T-cell (primary cell): ENCODE measurements at regions of chr1 and their contacts with region 1.

Region 1: GRCh38 chr1:214261206-214262123 is 19.5 kb upstream of the SMYD2 start:
- DNase-seq: peak; percentile 28 to 85 (median 73)
- ATAC-seq: peak; percentile 92 to 94 (median 92)
- H3K4me3 ChIP-seq: no peak overlapping the region
- H3K4me3 Mint-ChIP-seq: no peak overlapping the region
- H3K27ac ChIP-seq: no peak overlapping the region
- H3K27ac Mint-ChIP-seq: no peak overlapping the region
- H3K4me1 ChIP-seq: no peaks in the 10 kb centered on the region
- H3K4me1 Mint-ChIP-seq: peaks cover 0 to 3% (median 3%) of the 10 kb centered on the region in 3 donors
- H3K27me3 ChIP-seq: peaks cover 0 to 19% of the 10 kb centered on the region in 2 experiments
- H3K27me3 Mint-ChIP-seq: peaks cover 41 to 67% of the 10 kb centered on the region in 2 donors

Region 2: GRCh38 chr1:214277704-214278635 is 16.5 kb after region 1 on chr1:
- CTCF ChIA-PET with region 1: interaction called, 13 to 20 read pairs
- POLR2A ChIA-PET with region 1: no interaction called
- DNase-seq: no peak
- ATAC-seq: no peak
- H3K4me3 ChIP-seq: no peak overlapping the region
- H3K4me3 Mint-ChIP-seq: no peak overlapping the region
- H3K27ac ChIP-seq: no peak overlapping the region
- H3K27ac Mint-ChIP-seq: peak overlapping the region; percentile 71 to 80
- H3K4me1 ChIP-seq: peaks cover 9 to 25% of the 10 kb centered on the region in 2 experiments
- H3K4me1 Mint-ChIP-seq: peaks cover 26 to 40% (median 33%) of the 10 kb centered on the region in 3 donors
- H3K27me3 ChIP-seq: no peaks in the 10 kb centered on the region
- H3K27me3 Mint-ChIP-seq: no peaks in the 10 kb centered on the region

Region 3: DNA sequence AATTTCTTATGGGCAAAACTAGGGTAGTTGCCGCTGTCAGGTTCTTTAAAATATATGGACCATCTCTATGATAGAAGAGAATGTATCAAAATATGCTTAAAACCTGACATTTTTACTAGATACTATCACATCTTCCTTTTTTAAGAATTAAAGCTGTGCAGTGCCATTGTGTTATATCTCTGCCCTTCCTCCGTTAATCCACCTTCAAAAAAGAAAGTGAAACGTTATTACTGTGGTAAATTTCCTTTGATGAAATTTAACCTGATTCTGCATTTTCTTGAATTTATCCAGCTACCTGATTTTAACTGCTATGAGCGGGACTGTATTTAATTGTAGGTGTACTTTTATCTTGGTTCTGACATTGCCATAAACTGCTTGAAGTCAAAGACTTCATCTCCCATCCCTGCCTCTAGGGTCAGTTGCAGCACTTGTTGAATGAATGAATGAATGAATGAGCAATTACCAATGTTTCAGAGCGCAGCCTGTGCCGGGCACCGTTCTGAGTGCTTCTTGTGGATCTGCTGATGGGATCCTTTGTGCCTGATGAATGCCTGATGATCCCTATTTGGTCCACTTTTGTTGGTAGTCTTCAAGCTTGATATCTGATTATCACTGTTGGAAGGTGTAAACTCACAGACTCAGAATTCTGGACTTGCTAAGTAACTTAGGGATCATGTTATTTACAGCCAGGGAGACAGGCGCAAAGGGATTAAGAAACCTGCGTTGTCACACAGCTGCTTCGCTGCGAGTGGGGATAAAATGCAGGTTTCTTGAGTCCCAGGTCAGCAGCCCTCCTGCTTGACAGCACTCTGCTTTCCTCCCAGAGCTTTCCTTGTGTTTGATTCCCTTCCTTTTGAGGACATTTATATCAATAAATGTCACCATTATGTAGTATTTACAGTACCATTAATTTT is 49.6 kb after region 1 on chr1:
- CTCF ChIA-PET with region 1: interaction called, 3 to 10 read pairs
- POLR2A ChIA-PET with region 1: no interaction called
- DNase-seq: peak in 1 of 35 experiments; percentile 17
- ATAC-seq: peak in 2 of 4 experiments; percentile 37 to 47
- H3K4me3 ChIP-seq: peak overlapping the region in 1 of 2 donors; percentile 6
- H3K4me3 Mint-ChIP-seq: peak overlapping the region; percentile 56 to 74 (median 65)
- H3K27ac ChIP-seq: no peak overlapping the region
- H3K27ac Mint-ChIP-seq: no peak overlapping the region
- H3K4me1 ChIP-seq: peaks cover 2 to 8% of the 10 kb centered on the region in 2 experiments
- H3K4me1 Mint-ChIP-seq: peaks cover 38 to 58% (median 46%) of the 10 kb centered on the region in 3 donors
- H3K27me3 ChIP-seq: no peaks in the 10 kb centered on the region
- H3K27me3 Mint-ChIP-seq: no peaks in the 10 kb centered on the region